Astrocyte of the cerebellum (primary cell): ENCODE measurements at regions of chr17 and their contacts with region 1.

Region 1: DNA sequence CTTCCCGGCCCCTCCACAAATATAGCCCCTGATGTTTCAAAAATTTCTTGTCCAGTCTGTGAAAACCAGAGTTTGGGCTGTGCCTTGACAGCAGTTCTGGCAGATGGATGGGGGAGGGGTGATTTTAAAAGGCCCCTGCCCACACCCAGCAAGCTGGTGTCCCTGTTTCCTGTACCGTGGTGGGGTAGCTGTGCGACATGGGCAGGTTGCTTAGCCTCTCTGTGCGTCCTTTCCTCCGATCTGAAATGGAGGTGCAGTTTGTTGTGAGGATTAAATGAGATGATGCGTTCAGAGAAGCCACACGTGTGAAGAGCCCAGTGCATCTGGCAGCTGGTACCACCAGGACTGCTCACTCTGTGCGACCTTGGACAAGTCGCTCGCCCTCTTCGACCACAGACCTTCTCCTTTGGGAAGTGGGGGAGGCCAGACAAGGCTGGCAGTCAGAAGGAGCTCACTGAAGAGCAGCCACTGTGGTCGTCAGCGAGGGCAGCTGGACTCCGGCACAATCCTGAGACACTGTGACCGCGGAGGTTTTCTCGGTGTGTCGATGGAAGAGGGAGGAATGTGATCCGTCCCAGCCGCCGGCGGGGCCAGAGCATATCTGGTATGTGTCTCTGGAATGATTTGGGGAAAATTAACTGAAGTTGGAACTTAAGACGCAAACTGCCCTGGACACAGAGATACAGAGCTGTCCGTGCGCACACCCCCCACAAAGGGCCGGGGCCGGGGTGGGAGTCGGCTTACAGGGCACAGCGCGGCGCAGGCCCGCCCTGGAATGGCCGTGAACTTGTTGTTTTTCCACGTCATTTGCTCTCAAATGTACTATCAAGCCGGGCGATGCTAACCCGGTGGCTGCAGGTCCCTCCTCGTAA is 721 bp upstream of the WFIKKN2 start:
- DNase-seq: no peak
- H3K4me3 ChIP-seq: no peak overlapping the region
- CTCF ChIP-seq: no peak

Region 2: GRCh38 chr17:50783193-50783660 is 51.4 kb before region 1 on chr17:
- in situ Hi-C with region 1: loop called (anchors 10 kb)
- DNase-seq: peak; percentile 76
- H3K4me3 ChIP-seq: no peak overlapping the region
- CTCF ChIP-seq: peak; percentile 99

Region 3: DNA sequence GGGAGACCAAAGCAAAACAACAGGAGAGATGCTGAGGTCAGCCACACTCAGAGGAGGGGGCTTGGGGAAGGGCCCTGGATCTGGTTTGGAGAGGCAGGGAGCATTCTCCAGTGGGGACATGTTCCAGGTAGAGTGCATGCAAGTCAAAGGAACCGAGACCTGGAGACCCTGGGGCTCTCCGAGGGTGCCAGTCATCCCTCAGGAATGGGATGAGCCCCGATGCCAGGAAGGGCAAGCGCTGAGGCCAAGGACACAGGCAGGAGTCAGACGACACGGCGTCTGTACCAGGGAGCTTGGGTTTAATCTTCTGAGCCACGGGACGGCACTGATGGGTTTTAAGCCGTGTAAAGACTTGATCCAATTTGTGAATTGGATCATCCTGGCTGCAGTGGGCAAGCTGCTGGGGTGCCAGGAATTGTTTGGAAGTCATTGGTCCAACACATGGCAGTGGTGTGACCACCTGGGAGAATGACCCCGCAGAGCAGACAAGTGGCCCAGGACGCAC is 34.4 kb before region 1 on chr17:
- in situ Hi-C with region 1: loop called (anchors 5 kb)
- DNase-seq: no peak
- H3K4me3 ChIP-seq: no peak overlapping the region
- CTCF ChIP-seq: no peak

Region 4: GRCh38 chr17:50919321-50920085 is 84.8 kb after region 1 on chr17:
- in situ Hi-C with region 1: no loop called
- DNase-seq: peak; percentile 68
- H3K4me3 ChIP-seq: no peak overlapping the region
- CTCF ChIP-seq: no peak